ENCODE measurements at regions of chr2 and their contacts with region 1.

Region 1: DNA sequence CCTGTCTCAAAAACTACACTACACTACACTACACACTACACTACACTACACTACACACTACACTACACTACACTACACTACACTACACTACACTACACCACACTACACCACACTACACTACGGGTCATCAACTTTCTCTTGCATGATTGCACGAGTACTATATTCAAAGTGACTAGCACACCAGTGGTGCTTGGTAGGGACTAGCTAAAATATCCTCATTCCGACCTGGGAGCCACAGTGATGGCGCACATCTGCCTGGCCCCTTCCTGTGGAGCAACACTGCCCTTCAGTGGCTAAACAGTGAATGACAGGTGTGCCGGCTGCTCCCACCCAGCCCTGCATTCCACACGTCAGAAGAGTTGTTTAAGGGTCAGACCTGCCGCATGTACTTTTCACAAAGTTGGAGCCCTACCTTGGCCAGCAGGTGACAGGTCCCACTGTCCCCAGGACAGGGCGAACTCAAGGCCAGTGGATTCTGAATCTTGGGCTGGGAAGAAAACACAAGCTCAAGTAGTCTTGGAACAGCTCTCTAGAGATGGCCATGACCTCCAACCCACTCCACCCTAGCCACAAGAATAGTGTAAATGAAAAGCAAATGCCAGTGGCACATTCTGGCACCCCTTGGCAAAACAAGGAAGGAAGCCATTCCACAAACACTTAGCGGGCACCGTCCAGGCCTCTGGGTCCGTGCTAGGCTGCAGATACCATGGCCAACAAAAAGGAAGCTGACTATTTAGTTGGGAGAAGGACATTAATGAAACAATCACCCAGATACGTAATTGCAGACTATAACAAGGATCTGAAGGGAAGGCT is 79.7 kb upstream of the MSH2 start:
- DNase-seq: peak; percentile 74 to 82 (median 78)
- H3K4me3 ChIP-seq: no peak overlapping the region
- H3K27ac ChIP-seq: no peak overlapping the region
- H3K4me1 ChIP-seq: peaks cover 0 to 11% (median 5%) of the 10 kb centered on the region in 4 experiments
- H3K27me3 ChIP-seq: peaks cover 0 to 2% (median 0%) of the 10 kb centered on the region in 5 experiments

Region 2: DNA sequence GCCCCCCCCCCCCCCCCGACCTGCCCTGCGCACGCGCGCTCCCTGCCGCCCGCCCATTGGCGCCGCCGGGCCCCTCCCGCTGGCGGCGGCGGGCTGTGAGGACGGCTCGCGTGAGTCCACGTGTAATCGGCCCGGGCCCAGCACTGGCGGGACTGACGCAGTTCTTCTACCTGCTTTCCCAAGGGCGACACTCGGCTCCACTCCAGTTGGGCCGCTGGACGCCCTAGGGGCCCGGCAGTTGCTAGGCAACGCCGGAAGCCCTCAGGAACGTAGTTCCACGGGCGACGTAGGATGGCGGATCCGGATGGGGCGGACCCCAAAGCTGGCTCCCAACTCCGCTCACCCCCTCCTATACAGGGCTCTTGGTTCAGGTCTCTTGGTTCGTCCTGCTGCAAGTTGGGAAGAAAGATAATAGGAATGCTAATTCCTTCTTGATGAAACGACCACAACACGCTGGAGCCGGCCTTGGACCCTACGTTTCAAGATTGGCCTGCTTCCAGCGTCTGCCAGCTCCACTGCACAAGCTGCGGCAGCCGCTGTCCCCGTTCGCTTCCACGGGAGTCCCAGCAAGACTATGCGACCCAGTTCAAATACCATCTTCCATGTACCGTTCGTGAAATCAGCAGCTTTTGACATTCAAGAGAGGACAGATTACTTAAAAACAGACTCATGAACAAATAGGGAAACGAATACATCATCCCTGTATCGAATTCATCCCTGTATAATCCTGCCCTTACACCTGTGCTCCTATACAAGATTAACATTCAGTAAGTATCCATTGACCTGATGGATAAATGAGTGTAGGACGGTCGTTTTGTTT is 407.2 kb before region 1 on chr2:
- CTCF ChIA-PET with region 1: interaction called, 17 read pairs
- POLR2A ChIA-PET with region 1: no interaction called
- DNase-seq: peak; percentile 81 to 91 (median 87)
- H3K4me3 ChIP-seq: peak overlapping the region; percentile 79 to 98 (median 92)
- H3K27ac ChIP-seq: peak overlapping the region; percentile 90 to 97
- H3K4me1 ChIP-seq: peaks cover 9 to 32% (median 25%) of the 10 kb centered on the region in 4 experiments
- H3K27me3 ChIP-seq: no peaks in the 10 kb centered on the region

Region 3: GRCh38 chr2:47016172-47016913 is 306.9 kb before region 1 on chr2:
- CTCF ChIA-PET with region 1: interaction called, 14 read pairs
- POLR2A ChIA-PET with region 1: no interaction called
- DNase-seq: peak; percentile 55 to 87 (median 85)
- H3K4me3 ChIP-seq: peak overlapping the region in 1 of 7 experiments; percentile 5
- H3K27ac ChIP-seq: no peak overlapping the region
- H3K4me1 ChIP-seq: peaks cover 3 to 21% (median 16%) of the 10 kb centered on the region in 4 experiments
- H3K27me3 ChIP-seq: no peaks in the 10 kb centered on the region

Region 4: DNA sequence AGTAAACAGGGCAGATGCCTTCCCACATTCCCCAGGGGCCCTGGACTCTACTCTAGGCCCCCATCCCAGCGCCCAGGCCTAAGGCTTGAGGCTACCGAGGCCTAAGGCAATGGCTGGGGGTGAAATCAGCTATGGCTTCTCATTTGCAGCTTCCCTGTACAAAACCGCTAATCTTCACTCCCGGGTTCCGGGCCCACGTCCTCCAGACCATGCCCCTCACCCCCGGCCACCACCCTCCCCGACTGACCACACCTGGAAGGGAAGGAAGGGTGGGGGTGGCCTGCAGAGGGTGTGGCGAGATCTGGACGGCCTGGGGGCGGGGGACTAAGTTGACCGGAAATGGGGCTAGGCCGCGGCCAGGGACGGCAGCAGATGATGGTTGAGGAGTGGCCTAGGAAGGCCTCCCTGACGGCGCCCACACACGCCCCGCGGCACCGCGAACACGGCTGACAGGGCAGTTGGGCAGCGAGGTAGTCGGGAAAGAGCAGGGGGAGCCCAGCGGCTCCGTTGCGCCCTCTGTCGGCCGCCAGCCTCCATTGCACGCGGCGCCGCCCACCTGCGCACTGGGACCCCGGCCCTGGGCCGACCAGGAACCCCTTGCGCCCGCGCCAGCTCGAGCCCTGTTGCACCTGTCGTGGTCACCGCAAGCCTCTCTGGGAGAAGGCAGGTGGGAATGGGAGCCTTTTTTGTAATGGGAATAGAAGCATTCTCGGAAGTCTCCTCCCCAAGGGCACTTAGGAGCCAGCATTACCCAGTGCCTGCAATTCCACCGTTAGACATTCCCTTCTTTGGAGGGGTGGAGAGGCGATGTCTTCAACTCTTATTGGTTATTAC is 51.0 kb before region 1 on chr2:
- CTCF ChIA-PET with region 1: interaction called, 43 read pairs
- POLR2A ChIA-PET with region 1: no interaction called
- DNase-seq: peak; percentile 35 to 60 (median 58)
- H3K4me3 ChIP-seq: peak overlapping the region; percentile 6 to 70 (median 53)
- H3K27ac ChIP-seq: no peak overlapping the region
- H3K4me1 ChIP-seq: peaks cover 0 to 11% (median 9%) of the 10 kb centered on the region in 4 experiments
- H3K27me3 ChIP-seq: no peaks in the 10 kb centered on the region

Region 5: GRCh38 chr2:47309952-47310800 is 13.0 kb before region 1 on chr2:
- CTCF ChIA-PET with region 1: interaction called, 27 read pairs
- POLR2A ChIA-PET with region 1: no interaction called
- DNase-seq: peak; percentile 67 to 93 (median 91)
- H3K4me3 ChIP-seq: peak overlapping the region in 3 of 7 experiments; percentile 20 to 45 (median 22)
- H3K27ac ChIP-seq: peak overlapping the region; percentile 47 to 72
- H3K4me1 ChIP-seq: peaks cover 8 to 52% (median 42%) of the 10 kb centered on the region in 4 experiments
- H3K27me3 ChIP-seq: no peaks in the 10 kb centered on the region

Region 6: DNA sequence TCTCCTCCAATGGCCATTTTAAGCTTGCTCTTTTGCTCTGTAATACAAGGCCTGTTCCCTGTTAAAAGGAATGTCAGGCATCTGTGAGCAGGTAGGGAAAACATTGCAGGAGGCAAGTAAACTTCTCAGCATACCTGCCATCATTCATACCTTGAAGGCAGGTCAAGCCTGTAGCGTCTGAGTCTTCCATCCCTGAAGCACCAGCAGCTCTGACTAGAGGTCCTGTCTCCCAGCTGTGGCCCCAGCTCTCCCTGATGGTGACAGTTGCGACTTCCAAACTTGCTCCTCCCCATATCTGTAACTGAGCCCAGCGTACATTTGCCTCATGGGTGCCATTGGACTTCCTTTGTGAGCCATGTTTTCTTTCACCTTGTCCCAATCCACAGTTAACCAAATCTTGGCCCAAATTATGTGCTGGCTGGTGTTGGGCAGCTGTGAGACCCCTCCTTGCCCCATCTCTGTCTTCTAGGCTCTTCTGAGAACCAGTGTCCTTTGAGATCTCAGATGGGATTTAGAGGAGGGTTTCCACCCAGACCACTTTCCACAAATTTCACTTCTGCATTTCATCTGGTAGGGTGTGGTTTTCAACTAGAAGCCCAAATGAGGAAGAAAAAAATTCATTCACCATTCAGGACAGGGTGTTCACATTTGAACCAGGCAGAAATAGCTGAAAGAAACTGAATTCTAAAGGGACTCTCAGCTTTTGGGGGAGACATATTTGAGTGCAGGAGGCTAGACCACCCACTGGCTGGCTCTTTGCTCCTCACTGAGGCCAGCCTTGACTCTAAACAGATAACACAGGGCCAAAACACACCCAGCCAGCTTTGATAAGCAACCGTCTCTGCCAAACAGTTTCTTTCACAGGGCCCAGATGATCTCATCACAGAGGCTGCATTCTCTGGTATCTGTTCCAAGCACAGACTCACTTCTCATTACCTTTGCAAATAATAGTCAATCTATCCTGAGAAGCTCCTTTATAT is 13.3 kb after region 1 on chr2:
- CTCF ChIA-PET with region 1: interaction called, 18 read pairs
- POLR2A ChIA-PET with region 1: no interaction called
- DNase-seq: peak; percentile 47 to 81 (median 80)
- H3K4me3 ChIP-seq: no peak overlapping the region
- H3K27ac ChIP-seq: peak overlapping the region in 1 of 2 experiments; percentile 59
- H3K4me1 ChIP-seq: peaks cover 0 to 16% (median 11%) of the 10 kb centered on the region in 4 experiments
- H3K27me3 ChIP-seq: no peaks in the 10 kb centered on the region

Measured in common myeloid progenitor, CD34-positive (primary cell).